Psoas muscle (tissue), 8 donors: ENCODE measurements at regions of chr12 and their contacts with region 1.

Region 1: GRCh38 chr12:103779428-103780092 is 61.5 kb downstream of the NT5DC3 start:
- DNase-seq: no peak
- ATAC-seq: no peak
- H3K4me3 ChIP-seq: no peak overlapping the region
- H3K27ac ChIP-seq: no peak overlapping the region
- H3K4me1 ChIP-seq: peaks cover 40% of the 10 kb centered on the region
- H3K27me3 ChIP-seq: no peaks in the 10 kb centered on the region
- CTCF ChIP-seq: no peak

Region 2: GRCh38 chr12:103799870-103800771 is 20.6 kb after region 1 on chr12:
- intact Hi-C with region 1: loop called in 1 of 2 experiments (anchors 1 kb)
- DNase-seq: peak; percentile 61 to 79
- ATAC-seq: peak; percentile 84 to 92 (median 86)
- H3K4me3 ChIP-seq: peak overlapping the region; percentile 33
- H3K27ac ChIP-seq: peak overlapping the region; percentile 88
- H3K4me1 ChIP-seq: peaks cover 49% of the 10 kb centered on the region
- H3K27me3 ChIP-seq: no peaks in the 10 kb centered on the region
- CTCF ChIP-seq: no peak

Region 3: DNA sequence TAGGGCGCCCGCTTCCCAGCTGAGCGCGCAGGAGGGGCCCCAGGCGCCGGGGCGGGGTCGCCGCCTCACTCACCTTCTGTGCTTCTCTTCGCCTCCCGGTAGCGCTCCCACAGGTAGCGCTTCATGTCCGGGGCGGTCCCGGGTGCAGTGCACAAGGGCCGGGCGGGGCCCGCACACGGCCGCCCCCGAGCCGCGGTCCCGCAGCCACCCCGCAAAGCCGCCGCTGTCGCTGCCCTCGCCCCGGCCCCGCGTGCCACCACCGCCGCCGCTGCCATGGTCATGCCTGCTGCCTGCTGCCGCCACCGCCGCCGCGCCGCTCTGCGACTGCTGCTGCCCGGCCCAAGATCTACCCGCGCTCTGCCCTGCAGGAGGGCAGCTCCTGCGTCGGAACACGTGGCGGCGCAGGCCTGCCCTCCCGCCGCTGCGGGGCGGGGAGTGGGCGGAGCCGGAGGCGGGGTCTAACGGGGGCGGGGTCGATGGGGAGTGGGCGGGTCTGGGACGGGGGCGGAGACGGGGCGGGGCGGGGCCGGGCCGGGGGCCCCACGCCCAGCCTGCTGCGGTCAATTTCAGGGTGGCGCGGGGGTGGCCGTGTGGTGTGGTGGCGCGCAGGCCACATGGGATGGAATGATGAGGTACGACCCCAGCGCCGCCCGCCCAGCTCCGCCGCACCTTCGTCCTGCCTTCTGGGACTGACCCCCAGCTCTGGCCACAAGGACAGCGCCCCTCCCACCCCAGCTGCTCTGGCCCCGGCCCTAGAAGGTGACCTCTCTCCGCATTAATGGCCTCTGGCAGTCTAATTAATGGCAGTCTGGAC is 61.5 kb after region 1 on chr12 and contains the start of gene NT5DC3:
- intact Hi-C with region 1: loop called in 1 of 2 experiments (anchors 5 kb)
- DNase-seq: peak; percentile 80 to 92
- ATAC-seq: peak; percentile 94 to 97 (median 94)
- H3K4me3 ChIP-seq: peak within 1 kb of the TSS; percentile 91
- H3K27ac ChIP-seq: peak within 1 kb of the TSS; percentile 94
- H3K4me1 ChIP-seq: no peaks in the 10 kb centered on the region
- H3K27me3 ChIP-seq: no peaks in the 10 kb centered on the region
- CTCF ChIP-seq: no peak
- total RNA-seq, gene NT5DC3: 15.2 to 64.2 (median 19.5) TPM